Thyroid gland (tissue), 4 donors: ENCODE measurements at regions of chr10 and their contacts with region 1.

Region 1: GRCh38 chr10:98323221-98324164 is 55.5 kb upstream of the LOXL4 start:
- DNase-seq: peak in 1 of 2 donors; percentile 30
- H3K4me3 ChIP-seq: no peak overlapping the region
- H3K27ac ChIP-seq: no peak overlapping the region
- H3K4me1 ChIP-seq: peaks cover 0 to 11% of the 10 kb centered on the region in 2 donors
- H3K27me3 ChIP-seq: no peaks in the 10 kb centered on the region
- CTCF ChIP-seq: no peak
- POLR2A ChIP-seq: no peak

Region 2: GRCh38 chr10:98414932-98415730 is 91.6 kb after region 1 on chr10 and contains the start of gene PYROXD2:
- intact Hi-C with region 1: loop called (anchors 10 kb)
- DNase-seq: peak; percentile 95 to 97
- H3K4me3 ChIP-seq: peak within 1 kb of the TSS; percentile 34 to 61 (median 51)
- H3K27ac ChIP-seq: peak within 1 kb of the TSS; percentile 77 to 87 (median 79)
- H3K4me1 ChIP-seq: peaks cover 16 to 43% of the 10 kb centered on the region in 2 donors
- H3K27me3 ChIP-seq: no peaks in the 10 kb centered on the region
- CTCF ChIP-seq: no peak
- POLR2A ChIP-seq: peak in 1 of 2 donors; percentile 85
- total RNA-seq, gene PYROXD2: 9.9 to 20.1 (median 12.4) TPM

Region 3: DNA sequence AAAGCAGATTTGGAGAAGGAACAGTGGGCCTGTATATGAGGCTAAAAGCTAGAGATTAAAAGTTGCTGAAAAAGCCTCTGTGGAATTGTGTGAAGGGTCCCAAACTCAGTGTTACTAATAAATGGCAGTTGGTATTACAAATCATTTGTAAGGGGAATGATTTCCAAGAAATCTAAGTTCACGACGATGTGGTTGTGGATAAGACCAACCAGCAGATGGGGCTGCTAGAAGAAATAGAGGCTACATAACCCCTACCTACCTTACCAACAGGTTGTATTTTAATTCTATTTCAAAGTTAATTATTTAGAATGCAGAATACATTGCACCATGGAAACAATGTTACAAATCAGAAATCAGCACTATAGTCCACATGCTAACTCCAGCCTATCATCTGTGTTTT is 535.0 kb after region 1 on chr10:
- intact Hi-C with region 1: no loop called
- DNase-seq: no peak
- H3K4me3 ChIP-seq: no peak overlapping the region
- H3K27ac ChIP-seq: no peak overlapping the region
- H3K4me1 ChIP-seq: no peaks in the 10 kb centered on the region
- H3K27me3 ChIP-seq: no peaks in the 10 kb centered on the region
- CTCF ChIP-seq: no peak
- POLR2A ChIP-seq: no peak